ENCODE measurements at regions of chr11 and their contacts with region 1.

Region 1: GRCh38 chr11:71928737-71929452 is at the start of gene RNF121:
- DNase-seq: peak; percentile 97
- ATAC-seq: peak; percentile 97
- H3K4me3 ChIP-seq: peak within 1 kb of the TSS; percentile 82 to 98 (median 90)
- H3K27ac ChIP-seq: peak within 1 kb of the TSS; percentile 84 to 93 (median 90)
- H3K4me1 ChIP-seq: peaks cover 47 to 50% of the 10 kb centered on the region in 2 donors
- H3K27me3 ChIP-seq: no peaks in the 10 kb centered on the region
- CTCF ChIP-seq: no peak
- POLR2A ChIP-seq: peak; percentile 65 to 79
- total RNA-seq, gene RNF121: 25.0 to 35.5 (median 26.7) TPM

Region 2: GRCh38 chr11:71977743-71978418 is 49.0 kb after region 1 on chr11:
- in situ Hi-C with region 1: no loop called
- intact Hi-C with region 1: no loop called
- DNase-seq: peak in 1 of 2 donors; percentile 45
- ATAC-seq: peak; percentile 54 to 79
- H3K4me3 ChIP-seq: no peak overlapping the region
- H3K27ac ChIP-seq: no peak overlapping the region
- H3K4me1 ChIP-seq: peaks cover 3 to 8% of the 10 kb centered on the region in 2 donors
- H3K27me3 ChIP-seq: no peaks in the 10 kb centered on the region
- CTCF ChIP-seq: peak; percentile 39 to 75 (median 69)
- POLR2A ChIP-seq: no peak

Region 3: GRCh38 chr11:72112321-72113219 is 183.7 kb after region 1 on chr11 and contains the start of gene ANAPC15:
- in situ Hi-C with region 1: no loop called
- intact Hi-C with region 1: loop called (anchors 2 kb)
- DNase-seq: peak; percentile 98 to 99
- ATAC-seq: peak; percentile 94 to 95
- H3K4me3 ChIP-seq: peak within 1 kb of the TSS; percentile 59 to 68 (median 66)
- H3K27ac ChIP-seq: peak within 1 kb of the TSS; percentile 95 to 99 (median 98)
- H3K4me1 ChIP-seq: peaks cover 11 to 13% of the 10 kb centered on the region in 2 donors
- H3K27me3 ChIP-seq: no peaks in the 10 kb centered on the region
- CTCF ChIP-seq: no peak
- POLR2A ChIP-seq: peak; percentile 77 to 84
- total RNA-seq, gene ANAPC15: 21.2 to 39.3 (median 32.4) TPM